Kidney (tissue), 22 donors: ENCODE measurements at regions of chr11 and their contacts with region 1.

Region 1: GRCh38 chr11:59171508-59172322 is at the start of gene DTX4:
- DNase-seq: peak; percentile 94 to 96 (median 96)
- H3K4me3 ChIP-seq: peak within 1 kb of the TSS; percentile 73 to 86 (median 77)
- H3K27ac ChIP-seq: peak within 1 kb of the TSS; percentile 76 to 81
- H3K4me1 ChIP-seq: peaks cover 6 to 21% (median 8%) of the 10 kb centered on the region in 3 donors
- H3K27me3 ChIP-seq: no peaks in the 10 kb centered on the region
- CTCF ChIP-seq: peak; percentile 99
- total RNA-seq, gene DTX4: 21.8 TPM

Region 2: GRCh38 chr11:59207988-59208451 is 36.3 kb after region 1 on chr11:
- intact Hi-C with region 1: loop called (anchors 5 kb)
- DNase-seq: peak in 2 of 5 donors; percentile 46 to 76
- H3K4me3 ChIP-seq: no peak overlapping the region
- H3K27ac ChIP-seq: no peak overlapping the region
- H3K4me1 ChIP-seq: peaks cover 0 to 6% (median 0%) of the 10 kb centered on the region in 3 donors
- H3K27me3 ChIP-seq: no peaks in the 10 kb centered on the region
- CTCF ChIP-seq: peak; percentile 83

Region 3: GRCh38 chr11:59263225-59263894 is 91.6 kb after region 1 on chr11:
- intact Hi-C with region 1: no loop called
- DNase-seq: peak in 1 of 5 donors; percentile 77
- H3K4me3 ChIP-seq: no peak overlapping the region
- H3K27ac ChIP-seq: no peak overlapping the region
- H3K4me1 ChIP-seq: no peaks in the 10 kb centered on the region
- H3K27me3 ChIP-seq: no peaks in the 10 kb centered on the region
- CTCF ChIP-seq: peak; percentile 14

Region 4: GRCh38 chr11:59283825-59284772 is 112.4 kb after region 1 on chr11:
- intact Hi-C with region 1: loop called (anchors 5 kb)
- DNase-seq: peak in 2 of 5 donors; percentile 58 to 78
- H3K4me3 ChIP-seq: no peak overlapping the region
- H3K27ac ChIP-seq: no peak overlapping the region
- H3K4me1 ChIP-seq: no peaks in the 10 kb centered on the region
- H3K27me3 ChIP-seq: no peaks in the 10 kb centered on the region
- CTCF ChIP-seq: peak; percentile 81

Region 5: DNA sequence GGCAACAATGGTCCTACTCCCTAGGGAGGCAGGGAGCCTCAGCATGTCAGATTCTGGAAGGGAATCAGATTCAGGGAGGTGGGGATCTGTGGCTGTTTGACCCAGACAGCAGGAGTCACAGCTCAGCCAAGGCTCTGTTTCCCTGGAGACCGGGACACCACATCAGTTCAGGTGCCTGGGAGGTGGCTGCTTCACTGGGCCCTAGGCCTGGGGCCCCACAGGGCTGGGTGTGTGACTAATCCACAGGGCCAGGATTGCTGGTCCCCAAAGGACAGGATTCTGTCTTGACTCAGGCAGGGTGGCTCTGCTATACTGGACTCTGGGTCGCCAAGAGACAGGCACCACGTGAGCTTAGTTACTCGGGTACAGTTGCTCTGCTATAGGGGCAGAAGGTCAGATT is 183.5 kb after region 1 on chr11:
- intact Hi-C with region 1: no loop called
- DNase-seq: peak in 1 of 5 donors; percentile 33
- H3K4me3 ChIP-seq: no peak overlapping the region
- H3K27ac ChIP-seq: no peak overlapping the region
- H3K4me1 ChIP-seq: no peaks in the 10 kb centered on the region
- H3K27me3 ChIP-seq: no peaks in the 10 kb centered on the region
- CTCF ChIP-seq: no peak

Region 6: DNA sequence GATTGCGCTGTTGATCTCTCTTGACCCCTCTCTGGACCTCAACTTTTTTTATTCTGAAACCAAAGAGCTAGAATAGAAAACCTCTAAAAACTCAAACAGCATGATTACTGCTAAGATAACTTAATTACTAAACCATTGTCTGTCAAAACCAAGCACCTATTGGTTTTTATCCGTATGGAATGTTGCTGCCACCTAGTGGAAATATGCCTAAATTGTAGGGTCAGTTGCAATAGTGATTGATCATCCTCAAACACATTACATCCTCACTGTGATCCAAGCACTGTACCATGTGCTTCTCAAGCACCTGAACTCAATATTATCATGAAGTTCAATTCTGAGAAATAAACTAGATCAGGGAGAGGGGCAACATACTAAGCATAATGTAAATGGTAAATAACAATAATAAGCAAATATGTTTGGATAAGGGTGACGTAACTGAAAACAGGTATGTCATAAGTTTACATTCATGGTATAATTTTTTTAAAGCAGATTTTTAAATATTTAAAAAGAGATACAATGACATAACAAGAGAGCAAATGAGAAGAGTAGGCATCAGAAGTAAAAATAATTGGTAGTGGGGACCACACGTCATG is 258.3 kb after region 1 on chr11:
- intact Hi-C with region 1: loop called (anchors 5 kb)
- DNase-seq: peak in 2 of 5 donors; percentile 26 to 58
- H3K4me3 ChIP-seq: no peak overlapping the region
- H3K27ac ChIP-seq: no peak overlapping the region
- H3K4me1 ChIP-seq: no peaks in the 10 kb centered on the region
- H3K27me3 ChIP-seq: no peaks in the 10 kb centered on the region
- CTCF ChIP-seq: peak; percentile 75